Activated CD4-positive, alpha-beta memory T cell treated with anti-CD3 and anti-CD28 coated beads, Interleukin-2, amount 10 ng/mL, durations not matched to agents 7 days and 5 days (primary cell): ENCODE measurements at regions of chr6 and their contacts with region 1.

Region 1: DNA sequence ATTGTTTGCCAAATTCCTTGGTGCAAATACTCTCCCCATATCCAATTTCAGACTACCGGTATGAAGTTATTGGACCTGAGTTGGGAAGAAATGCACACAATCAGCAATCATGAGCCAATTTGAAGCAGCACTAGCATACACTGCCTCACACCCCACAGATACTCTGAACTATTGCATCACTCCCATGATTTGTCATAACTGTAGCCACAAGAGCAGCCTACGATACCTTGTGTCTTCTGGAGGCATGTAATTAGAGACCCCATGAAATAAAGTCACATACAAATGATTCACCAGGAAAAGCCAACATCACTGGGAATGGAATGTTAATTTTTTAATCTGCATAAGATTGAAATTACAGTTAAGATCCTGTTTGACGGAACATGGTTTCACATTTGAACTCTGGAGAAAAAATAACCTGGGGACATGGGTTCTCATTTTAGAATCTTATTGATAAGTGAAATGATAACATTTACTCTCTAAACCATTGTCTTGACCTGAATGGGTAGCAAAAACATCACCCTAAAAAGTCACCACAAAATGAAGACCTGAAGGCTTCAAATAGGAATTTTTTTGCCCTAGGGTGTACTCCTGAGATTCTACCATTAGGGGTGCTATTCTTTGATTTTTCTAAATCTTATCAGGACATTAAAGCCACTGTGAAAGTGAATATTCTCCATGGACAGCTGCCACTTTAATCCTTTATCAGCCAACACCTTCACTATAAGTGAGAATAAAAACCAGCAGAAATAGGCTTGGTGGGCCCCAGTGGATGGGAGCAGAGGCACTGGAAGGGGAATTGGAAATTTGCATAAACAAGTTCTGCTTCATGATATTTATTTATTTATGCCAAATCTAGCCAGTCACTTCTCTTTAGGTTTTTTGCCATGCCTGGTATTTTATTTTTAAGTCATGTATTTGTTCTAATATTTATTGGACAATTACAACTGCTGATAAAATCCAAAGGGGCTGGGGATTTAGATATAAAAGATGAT is 34.5 kb upstream of the HBS1L start:
- DNase-seq: peak; percentile 50
- H3K4me3 Mint-ChIP-seq: peak overlapping the region; percentile 69
- H3K27ac Mint-ChIP-seq: peak overlapping the region; percentile 83
- H3K4me1 Mint-ChIP-seq: peaks cover 76% of the 10 kb centered on the region
- H3K27me3 Mint-ChIP-seq: no peaks in the 10 kb centered on the region

Region 2: GRCh38 chr6:135021310-135022049 is 67.6 kb before region 1 on chr6:
- CTCF ChIA-PET with region 1: interaction called, 5 read pairs
- POLR2A ChIA-PET with region 1: interaction called, 13 read pairs
- DNase-seq: no peak
- H3K4me3 Mint-ChIP-seq: no peak overlapping the region
- H3K27ac Mint-ChIP-seq: peak overlapping the region; percentile 3
- H3K4me1 Mint-ChIP-seq: peaks cover 41% of the 10 kb centered on the region
- H3K27me3 Mint-ChIP-seq: no peaks in the 10 kb centered on the region

Region 3: GRCh38 chr6:135114355-135115145 is 25.4 kb after region 1 on chr6:
- CTCF ChIA-PET with region 1: interaction called, 10 read pairs
- POLR2A ChIA-PET with region 1: interaction called, 57 read pairs
- DNase-seq: peak; percentile 78
- H3K4me3 Mint-ChIP-seq: peak overlapping the region; percentile 46
- H3K27ac Mint-ChIP-seq: peak overlapping the region; percentile 95
- H3K4me1 Mint-ChIP-seq: peaks cover 75% of the 10 kb centered on the region
- H3K27me3 Mint-ChIP-seq: no peaks in the 10 kb centered on the region

Region 4: GRCh38 chr6:135121434-135121833 is 32.3 kb after region 1 on chr6:
- CTCF ChIA-PET with region 1: interaction called, 6 read pairs
- POLR2A ChIA-PET with region 1: interaction called, 57 read pairs
- DNase-seq: no peak
- H3K4me3 Mint-ChIP-seq: no peak overlapping the region
- H3K27ac Mint-ChIP-seq: no peak overlapping the region
- H3K4me1 Mint-ChIP-seq: peaks cover 38% of the 10 kb centered on the region
- H3K27me3 Mint-ChIP-seq: no peaks in the 10 kb centered on the region

Region 5: DNA sequence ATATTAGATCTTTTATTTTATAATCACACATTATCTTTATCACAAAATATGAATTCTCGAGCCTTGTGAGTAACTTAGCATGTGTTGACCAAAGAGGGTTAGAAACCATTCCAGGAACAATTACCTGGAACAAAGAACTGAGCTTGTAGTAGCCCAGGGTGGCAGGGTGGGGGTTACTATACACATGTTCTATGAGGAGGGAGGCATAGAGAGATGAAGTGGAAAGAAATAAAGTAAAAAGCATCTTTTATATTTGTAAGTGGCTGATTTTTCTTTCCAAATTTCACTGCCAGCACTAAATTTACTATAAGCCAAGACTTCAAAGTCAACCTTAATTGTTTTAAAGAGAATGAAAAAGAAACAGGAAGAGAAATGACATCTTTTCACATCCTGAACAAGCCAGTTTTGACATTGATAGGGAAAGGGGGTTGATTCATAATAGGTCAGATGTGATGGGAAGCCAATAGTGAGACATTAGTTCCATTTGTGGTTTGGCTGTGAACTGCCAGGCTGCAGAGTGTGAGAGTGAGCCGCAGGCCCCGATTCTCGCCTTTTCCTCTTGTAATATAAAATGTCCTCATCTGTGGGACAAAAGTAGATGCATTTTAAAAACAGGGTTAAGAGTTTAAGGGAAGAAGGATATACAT is 39.3 kb after region 1 on chr6:
- CTCF ChIA-PET with region 1: interaction called, 12 read pairs
- POLR2A ChIA-PET with region 1: interaction called, 24 read pairs
- DNase-seq: peak; percentile 74
- H3K4me3 Mint-ChIP-seq: peak overlapping the region; percentile 47
- H3K27ac Mint-ChIP-seq: peak overlapping the region; percentile 96
- H3K4me1 Mint-ChIP-seq: peaks cover 41% of the 10 kb centered on the region
- H3K27me3 Mint-ChIP-seq: no peaks in the 10 kb centered on the region

Region 6: GRCh38 chr6:135951169-135951568 is 862.1 kb after region 1 on chr6:
- CTCF ChIA-PET with region 1: no interaction called
- POLR2A ChIA-PET with region 1: no interaction called
- DNase-seq: no peak
- H3K4me3 Mint-ChIP-seq: no peak overlapping the region
- H3K27ac Mint-ChIP-seq: no peak overlapping the region
- H3K4me1 Mint-ChIP-seq: no peaks in the 10 kb centered on the region
- H3K27me3 Mint-ChIP-seq: peaks cover 14% of the 10 kb centered on the region